ENCODE measurements at regions of chr14 and their contacts with region 1.

Region 1: GRCh38 chr14:51979088-51979709 is 10.1 kb upstream of the RTRAF start:
- DNase-seq: peak; percentile 71 to 76 (median 73)
- H3K4me3 ChIP-seq: no peak overlapping the region
- H3K4me3 Mint-ChIP-seq: peak overlapping the region in 1 of 8 donors; percentile 34
- H3K27ac ChIP-seq: no peak overlapping the region
- H3K27ac Mint-ChIP-seq: peak overlapping the region in 2 of 7 donors; percentile 47 to 48
- H3K4me1 ChIP-seq: peaks cover 7% of the 10 kb centered on the region
- H3K4me1 Mint-ChIP-seq: peaks cover 0 to 6% (median 5%) of the 10 kb centered on the region in 4 donors
- H3K27me3 ChIP-seq: no peaks in the 10 kb centered on the region
- H3K27me3 Mint-ChIP-seq: no peaks in the 10 kb centered on the region

Region 2: GRCh38 chr14:51283402-51284085 is 695.7 kb before region 1 on chr14:
- CTCF ChIA-PET with region 1: interaction called, 23 read pairs
- POLR2A ChIA-PET with region 1: no interaction called
- intact Hi-C with region 1: no loop called
- DNase-seq: peak in 4 of 5 donors; percentile 11 to 40 (median 30)
- H3K4me3 ChIP-seq: no peak overlapping the region
- H3K4me3 Mint-ChIP-seq: no peak overlapping the region
- H3K27ac ChIP-seq: no peak overlapping the region
- H3K27ac Mint-ChIP-seq: no peak overlapping the region
- H3K4me1 ChIP-seq: no peaks in the 10 kb centered on the region
- H3K4me1 Mint-ChIP-seq: peaks cover 0 to 6% (median 3%) of the 10 kb centered on the region in 4 donors
- H3K27me3 ChIP-seq: no peaks in the 10 kb centered on the region
- H3K27me3 Mint-ChIP-seq: no peaks in the 10 kb centered on the region

Region 3: GRCh38 chr14:51828017-51828797 is 151.0 kb before region 1 on chr14:
- CTCF ChIA-PET with region 1: interaction called, 23 read pairs
- POLR2A ChIA-PET with region 1: interaction called, 3 read pairs
- intact Hi-C with region 1: no loop called
- DNase-seq: peak; percentile 30 to 80 (median 41)
- H3K4me3 ChIP-seq: no peak overlapping the region
- H3K4me3 Mint-ChIP-seq: peak overlapping the region in 2 of 8 donors; percentile 3 to 23
- H3K27ac ChIP-seq: no peak overlapping the region
- H3K27ac Mint-ChIP-seq: peak overlapping the region in 2 of 7 donors; percentile 12 to 24
- H3K4me1 ChIP-seq: peaks cover 19% of the 10 kb centered on the region
- H3K4me1 Mint-ChIP-seq: peaks cover 0 to 4% (median 0%) of the 10 kb centered on the region in 4 donors
- H3K27me3 ChIP-seq: no peaks in the 10 kb centered on the region
- H3K27me3 Mint-ChIP-seq: peaks cover 0 to 2% of the 10 kb centered on the region in 2 donors

Region 4: DNA sequence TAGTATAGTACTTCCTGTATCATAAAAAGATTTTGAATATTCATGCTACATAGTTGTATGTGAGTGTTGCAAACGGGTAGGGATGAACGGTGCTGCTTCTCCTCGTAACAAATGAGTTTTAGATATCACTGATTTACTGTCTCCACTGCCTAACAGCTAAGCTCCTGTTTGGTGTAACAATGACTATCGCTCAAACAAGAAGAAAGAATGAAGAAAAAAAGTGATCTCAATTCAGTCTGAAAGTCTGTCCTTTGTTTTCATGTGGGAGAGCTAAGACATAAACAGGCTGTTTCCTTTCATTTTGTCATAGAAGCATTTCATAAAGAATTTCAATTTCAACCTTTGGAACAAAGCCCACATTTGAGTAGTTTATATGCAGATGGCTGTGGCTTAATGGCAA is 15.9 kb before region 1 on chr14:
- CTCF ChIA-PET with region 1: interaction called, 64 read pairs
- POLR2A ChIA-PET with region 1: no interaction called
- intact Hi-C with region 1: no loop called
- DNase-seq: no peak
- H3K4me3 ChIP-seq: no peak overlapping the region
- H3K4me3 Mint-ChIP-seq: peak overlapping the region in 1 of 8 donors; percentile 35
- H3K27ac ChIP-seq: no peak overlapping the region
- H3K27ac Mint-ChIP-seq: peak overlapping the region; percentile 25 to 89 (median 68)
- H3K4me1 ChIP-seq: peaks cover 28% of the 10 kb centered on the region
- H3K4me1 Mint-ChIP-seq: peaks cover 31 to 51% (median 43%) of the 10 kb centered on the region in 4 donors
- H3K27me3 ChIP-seq: no peaks in the 10 kb centered on the region
- H3K27me3 Mint-ChIP-seq: no peaks in the 10 kb centered on the region

Region 5: GRCh38 chr14:51989293-51990234 is 10.4 kb after region 1 on chr14 and contains the start of gene RTRAF:
- CTCF ChIA-PET with region 1: interaction called, 16 read pairs
- POLR2A ChIA-PET with region 1: no interaction called
- intact Hi-C with region 1: no loop called
- DNase-seq: peak; percentile 91 to 93 (median 92)
- H3K4me3 ChIP-seq: peak within 1 kb of the TSS; percentile 63 to 80
- H3K4me3 Mint-ChIP-seq: peak within 1 kb of the TSS; percentile 93 to 100 (median 98)
- H3K27ac ChIP-seq: peak within 1 kb of the TSS; percentile 87
- H3K27ac Mint-ChIP-seq: peak within 1 kb of the TSS; percentile 87 to 100 (median 98)
- H3K4me1 ChIP-seq: peaks cover 42% of the 10 kb centered on the region
- H3K4me1 Mint-ChIP-seq: peaks cover 27 to 39% (median 30%) of the 10 kb centered on the region in 4 donors
- H3K27me3 ChIP-seq: no peaks in the 10 kb centered on the region
- H3K27me3 Mint-ChIP-seq: no peaks in the 10 kb centered on the region
- total RNA-seq, gene RTRAF: 105 to 114 TPM

Region 6: DNA sequence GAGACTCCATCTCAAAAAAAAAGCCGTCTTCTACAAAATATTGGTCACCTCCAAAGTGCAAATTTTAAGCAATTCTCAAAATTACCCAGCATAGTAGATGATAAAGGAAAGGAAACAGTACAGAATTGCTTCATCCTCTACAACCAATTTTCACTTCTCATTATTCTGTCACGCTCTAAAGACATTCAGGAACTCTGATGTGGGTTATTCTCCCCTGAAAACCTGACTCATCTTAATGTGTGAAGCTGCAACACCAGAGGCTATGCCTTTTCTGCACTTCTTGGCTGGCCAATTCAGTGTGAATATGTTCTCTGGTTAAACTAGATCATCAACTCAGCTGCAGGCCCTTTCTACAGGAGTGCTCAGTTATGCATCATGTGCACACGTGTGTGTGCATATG is 345.9 kb after region 1 on chr14:
- CTCF ChIA-PET with region 1: no interaction called
- POLR2A ChIA-PET with region 1: no interaction called
- intact Hi-C with region 1: no loop called
- DNase-seq: peak in 1 of 5 donors; percentile 53
- H3K4me3 ChIP-seq: no peak overlapping the region
- H3K4me3 Mint-ChIP-seq: peak overlapping the region in 7 of 8 donors; percentile 21 to 82 (median 59)
- H3K27ac ChIP-seq: no peak overlapping the region
- H3K27ac Mint-ChIP-seq: peak overlapping the region; percentile 0 to 89 (median 65)
- H3K4me1 ChIP-seq: peaks cover 87% of the 10 kb centered on the region
- H3K4me1 Mint-ChIP-seq: peaks cover 55 to 94% (median 74%) of the 10 kb centered on the region in 4 donors
- H3K27me3 ChIP-seq: no peaks in the 10 kb centered on the region
- H3K27me3 Mint-ChIP-seq: no peaks in the 10 kb centered on the region

Measured in CD4-positive, alpha-beta memory T cell (primary cell).